Motor neuron (in vitro differentiated cells): ENCODE measurements at regions of chr18 and their contacts with region 1.

Region 1: DNA sequence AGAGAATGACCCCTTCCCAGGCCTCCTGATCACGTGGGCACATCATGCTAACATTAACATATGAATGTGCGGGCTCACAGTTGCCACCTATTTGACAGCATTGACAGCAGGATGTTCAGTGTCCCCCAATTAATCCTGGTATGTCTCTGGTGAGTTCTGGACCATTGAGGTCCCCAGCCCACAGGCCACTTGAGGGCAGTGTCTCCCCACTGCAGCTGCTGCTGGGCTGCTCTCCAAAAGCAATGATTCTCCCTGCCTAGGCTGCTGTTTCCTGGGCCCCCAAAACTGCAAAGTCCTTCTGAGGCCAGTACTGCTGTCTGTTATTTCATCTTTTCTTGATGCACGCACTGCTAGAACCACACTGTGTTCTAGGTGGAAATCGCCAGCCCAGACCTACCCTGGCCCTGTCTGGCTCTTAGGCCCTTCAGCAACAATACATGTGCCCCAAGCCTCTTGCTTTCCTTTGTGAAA is 52.7 kb upstream of the MAPK4 start:
- ATAC-seq: peak; percentile 73 to 96 (median 86)
- H3K4me3 ChIP-seq: no peak overlapping the region
- H3K27ac ChIP-seq: no peak overlapping the region
- H3K4me1 ChIP-seq: peaks cover 0 to 4% of the 10 kb centered on the region in 2 donors

Region 2: GRCh38 chr18:50797142-50797541 is 290.0 kb after region 1 on chr18:
- in situ Hi-C with region 1: loop called in 4 of 9 experiments (anchors 25 kb)
- ATAC-seq: peak in 5 of 8 experiments; percentile 92 to 97 (median 95)
- H3K4me3 ChIP-seq: no peak overlapping the region
- H3K27ac ChIP-seq: no peak overlapping the region
- H3K4me1 ChIP-seq: peaks cover 0 to 3% of the 10 kb centered on the region in 2 donors